A549 (cell line): ENCODE measurements at regions of chr9 and their contacts with region 1.

Region 1: GRCh38 chr9:93003552-93004407 is 54.7 kb upstream of the SUSD3 start:
- DNase-seq: peak; percentile 72 to 73
- ATAC-seq: peak; percentile 94 to 97
- H3K4me3 ChIP-seq: peak overlapping the region; percentile 52
- H3K27ac ChIP-seq: peak overlapping the region; percentile 71 to 83
- H3K4me1 ChIP-seq: 0 out of 3 replicates have a peak, but pooled peaks cover 6% of the 10 kb centered on the region
- CTCF ChIP-seq: peak; percentile 90
- EP300 ChIP-seq: no peak
- POLR2A ChIP-seq: no peak
- RAD21 ChIP-seq: peak; percentile 83 to 86

Region 2: GRCh38 chr9:92992549-92992948 is 11.2 kb before region 1 on chr9:
- CTCF ChIA-PET with region 1: interaction called, 26 read pairs
- POLR2A ChIA-PET with region 1: no interaction called
- DNase-seq: no peak
- ATAC-seq: no peak
- H3K4me3 ChIP-seq: no peak overlapping the region
- H3K27ac ChIP-seq: no peak overlapping the region
- H3K4me1 ChIP-seq: no peaks in the 10 kb centered on the region
- CTCF ChIP-seq: no peak
- EP300 ChIP-seq: no peak
- POLR2A ChIP-seq: no peak
- RAD21 ChIP-seq: no peak

Region 3: GRCh38 chr9:93024986-93025630 is 21.3 kb after region 1 on chr9:
- CTCF ChIA-PET with region 1: interaction called, 20 read pairs
- POLR2A ChIA-PET with region 1: no interaction called
- DNase-seq: no peak
- ATAC-seq: no peak
- H3K4me3 ChIP-seq: no peak overlapping the region
- H3K27ac ChIP-seq: no peak overlapping the region
- H3K4me1 ChIP-seq: no peaks in the 10 kb centered on the region
- CTCF ChIP-seq: no peak
- EP300 ChIP-seq: no peak
- POLR2A ChIP-seq: no peak
- RAD21 ChIP-seq: no peak

Region 4: GRCh38 chr9:93086447-93087224 is 82.9 kb after region 1 on chr9:
- CTCF ChIA-PET with region 1: interaction called, 12 read pairs
- POLR2A ChIA-PET with region 1: no interaction called
- DNase-seq: no peak
- ATAC-seq: no peak
- H3K4me3 ChIP-seq: no peak overlapping the region
- H3K27ac ChIP-seq: no peak overlapping the region
- H3K4me1 ChIP-seq: peaks cover 7% of the 10 kb centered on the region; the same call in 2 of the 3 replicates
- CTCF ChIP-seq: no peak
- EP300 ChIP-seq: no peak
- POLR2A ChIP-seq: no peak
- RAD21 ChIP-seq: no peak